BJ (cell line): ENCODE measurements at regions of chr5 and their contacts with region 1.

Region 1: GRCh38 chr5:143707806-143708205 is 104.2 kb upstream of the HMHB1 start:
- DNase-seq: no peak
- H3K4me3 ChIP-seq: no peak overlapping the region
- H3K27me3 ChIP-seq: no peaks in the 10 kb centered on the region
- CTCF ChIP-seq: no peak

Region 2: DNA sequence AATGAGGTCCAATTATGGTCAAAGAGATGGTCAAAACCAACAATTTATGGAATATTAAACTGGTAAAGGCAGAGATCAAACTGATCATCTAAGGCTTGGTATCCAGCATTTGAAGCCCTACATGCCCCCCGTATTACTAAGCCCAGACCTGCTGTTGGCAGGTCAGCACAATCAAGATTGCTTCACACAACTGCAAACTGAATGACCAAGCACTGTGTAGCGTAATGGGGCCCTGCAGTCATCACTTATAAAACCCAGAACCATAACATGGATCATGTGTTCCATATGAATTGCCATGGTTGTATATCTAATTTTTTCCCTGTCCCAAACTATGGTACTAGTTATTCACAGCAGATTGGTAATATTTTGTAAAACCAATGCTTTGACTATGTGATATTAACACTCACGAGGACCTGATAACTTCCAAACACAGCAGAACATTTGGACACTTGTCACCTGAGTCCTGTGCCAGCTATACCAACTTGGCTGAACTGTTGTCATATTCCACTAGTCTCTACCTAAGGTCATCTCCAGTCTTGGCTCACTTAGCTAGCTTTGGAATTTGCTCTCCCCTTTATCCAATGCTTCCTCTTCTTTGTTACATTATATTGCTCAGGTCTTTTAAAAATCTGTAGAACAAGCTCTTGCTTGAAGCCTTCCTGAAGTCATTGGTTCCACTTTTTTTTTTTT is 22.5 kb after region 1 on chr5:
- CTCF ChIA-PET with region 1: no interaction called
- POLR2A ChIA-PET with region 1: interaction called, 20 read pairs
- DNase-seq: no peak
- H3K4me3 ChIP-seq: no peak overlapping the region
- H3K27me3 ChIP-seq: no peaks in the 10 kb centered on the region
- CTCF ChIP-seq: no peak